ENCODE measurements at regions of chr10 and their contacts with region 1.

Region 1: GRCh38 chr10:86960003-86960862 is 1.8 kb downstream of the SNCG start:
- DNase-seq: peak; percentile 73 to 88
- ATAC-seq: peak; percentile 81
- H3K4me3 ChIP-seq: no peak overlapping the region
- H3K27ac ChIP-seq: no peak overlapping the region
- H3K4me1 ChIP-seq: peaks cover 0 to 5% of the 10 kb centered on the region in 2 donors
- H3K27me3 ChIP-seq: no peaks in the 10 kb centered on the region

Region 2: DNA sequence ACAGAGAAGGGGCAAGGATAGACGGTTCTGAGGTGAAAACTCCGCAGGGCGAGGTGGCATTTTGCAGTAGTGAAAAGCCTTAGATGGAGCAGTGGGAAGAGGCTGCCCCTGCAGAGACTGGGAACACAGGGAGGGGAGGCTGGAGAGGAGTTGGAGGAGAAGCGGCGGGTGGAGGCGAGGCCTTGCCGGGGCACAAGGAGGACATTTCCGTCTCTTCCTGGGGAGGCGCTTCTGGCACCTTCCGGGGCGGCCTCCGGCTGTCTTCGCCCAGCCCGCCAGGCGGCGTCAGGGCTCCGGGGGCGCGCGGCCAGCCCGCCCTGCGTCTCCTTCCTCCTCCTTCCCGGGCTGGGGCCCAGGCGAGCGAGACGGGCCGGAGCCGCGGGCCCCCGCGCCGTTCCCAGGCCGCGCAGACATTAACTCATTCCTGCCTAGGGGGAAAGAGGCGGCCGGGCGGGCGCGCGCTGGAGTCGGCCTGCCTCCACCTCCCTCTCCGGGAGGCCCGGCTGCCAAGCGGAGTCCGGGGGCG is 249.2 kb before region 1 on chr10:
- intact Hi-C with region 1: loop called in 1 of 2 experiments (anchors 5 kb)
- DNase-seq: peak; percentile 94 to 96
- ATAC-seq: peak; percentile 94
- H3K4me3 ChIP-seq: peak overlapping the region; percentile 66 to 91
- H3K27ac ChIP-seq: peak overlapping the region; percentile 82 to 87
- H3K4me1 ChIP-seq: no peaks in the 10 kb centered on the region
- H3K27me3 ChIP-seq: no peaks in the 10 kb centered on the region

Region 3: GRCh38 chr10:86936661-86937501 is 23.4 kb before region 1 on chr10:
- intact Hi-C with region 1: loop called (anchors 1 to 2 kb)
- DNase-seq: no peak
- ATAC-seq: no peak
- H3K4me3 ChIP-seq: no peak overlapping the region
- H3K27ac ChIP-seq: peak overlapping the region in 1 of 2 donors; percentile 60
- H3K4me1 ChIP-seq: no peaks in the 10 kb centered on the region
- H3K27me3 ChIP-seq: no peaks in the 10 kb centered on the region

Measured in aorta (tissue), 5 donors.